Natural killer cell (primary cell): ENCODE measurements at regions of chr14 and their contacts with region 1.

Region 1: DNA sequence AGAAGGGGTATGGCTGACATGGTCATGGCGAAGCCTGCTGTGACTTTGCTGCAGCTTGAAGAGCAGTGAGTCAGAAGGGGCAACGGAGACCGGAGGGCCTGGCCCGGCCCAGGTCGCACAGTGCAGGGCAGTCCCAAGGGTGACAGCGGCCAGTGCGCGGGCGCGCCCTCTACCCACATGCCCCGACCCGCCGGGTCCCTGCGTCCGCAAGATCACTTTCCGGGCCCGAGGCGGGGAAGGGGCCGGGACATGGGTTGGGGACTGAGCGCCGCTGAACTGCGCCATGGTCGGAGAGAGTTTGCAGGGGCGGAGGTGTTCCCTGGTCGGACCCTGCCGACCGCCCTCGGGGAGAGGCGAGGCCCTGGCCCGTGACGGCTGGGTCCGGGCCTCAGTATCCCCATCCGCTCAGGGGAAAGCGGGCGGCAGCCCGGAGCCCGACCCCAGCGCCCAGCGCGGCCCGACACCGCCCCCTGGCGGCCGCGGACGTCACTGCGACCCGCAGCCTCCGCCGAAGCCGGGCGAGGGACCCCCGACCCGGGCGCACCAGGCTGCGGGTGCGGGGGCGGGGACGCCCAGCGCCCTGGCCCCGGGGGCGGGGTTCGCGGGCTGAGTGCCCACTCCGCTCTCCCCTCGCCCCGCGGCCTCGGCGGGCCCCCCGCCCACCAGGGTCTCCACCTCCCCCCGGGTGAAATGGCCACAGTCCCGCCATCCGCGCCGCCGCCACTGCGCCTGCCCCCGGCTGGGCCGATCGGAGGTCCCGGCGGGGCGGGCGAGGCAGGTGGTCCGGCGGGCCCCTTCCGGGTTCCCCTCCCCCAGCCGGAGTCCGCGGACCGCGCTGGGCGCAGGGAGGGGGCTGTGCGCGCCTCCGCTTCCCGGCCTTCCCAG is 7.2 kb upstream of the ANKRD9 start:
- DNase-seq: peak; percentile 72 to 77
- ATAC-seq: peak; percentile 84 to 93 (median 91)
- H3K4me3 ChIP-seq: peak overlapping the region; percentile 26
- H3K4me3 Mint-ChIP-seq: peak overlapping the region; percentile 91
- H3K27ac ChIP-seq: no peak overlapping the region
- H3K27ac Mint-ChIP-seq: peak overlapping the region; percentile 53 to 81
- H3K4me1 ChIP-seq: peaks cover 6% of the 10 kb centered on the region
- H3K4me1 Mint-ChIP-seq: peaks cover 4 to 9% of the 10 kb centered on the region in 2 donors
- H3K27me3 ChIP-seq: no peaks in the 10 kb centered on the region
- H3K27me3 Mint-ChIP-seq: peaks cover 0 to 8% of the 10 kb centered on the region in 2 donors
- CTCF ChIP-seq: peak; percentile 97

Region 2: GRCh38 chr14:102235275-102235897 is 281.4 kb before region 1 on chr14:
- intact Hi-C with region 1: loop called (anchors 5 kb)
- DNase-seq: peak; percentile 59 to 84
- ATAC-seq: peak; percentile 82 to 98 (median 97)
- H3K4me3 ChIP-seq: peak overlapping the region; percentile 14
- H3K4me3 Mint-ChIP-seq: no peak overlapping the region
- H3K27ac ChIP-seq: no peak overlapping the region
- H3K27ac Mint-ChIP-seq: no peak overlapping the region
- H3K4me1 ChIP-seq: no peaks in the 10 kb centered on the region
- H3K4me1 Mint-ChIP-seq: no peaks in the 10 kb centered on the region
- H3K27me3 ChIP-seq: no peaks in the 10 kb centered on the region
- H3K27me3 Mint-ChIP-seq: peaks cover 0 to 1% of the 10 kb centered on the region in 2 donors
- CTCF ChIP-seq: peak; percentile 70

Region 3: DNA sequence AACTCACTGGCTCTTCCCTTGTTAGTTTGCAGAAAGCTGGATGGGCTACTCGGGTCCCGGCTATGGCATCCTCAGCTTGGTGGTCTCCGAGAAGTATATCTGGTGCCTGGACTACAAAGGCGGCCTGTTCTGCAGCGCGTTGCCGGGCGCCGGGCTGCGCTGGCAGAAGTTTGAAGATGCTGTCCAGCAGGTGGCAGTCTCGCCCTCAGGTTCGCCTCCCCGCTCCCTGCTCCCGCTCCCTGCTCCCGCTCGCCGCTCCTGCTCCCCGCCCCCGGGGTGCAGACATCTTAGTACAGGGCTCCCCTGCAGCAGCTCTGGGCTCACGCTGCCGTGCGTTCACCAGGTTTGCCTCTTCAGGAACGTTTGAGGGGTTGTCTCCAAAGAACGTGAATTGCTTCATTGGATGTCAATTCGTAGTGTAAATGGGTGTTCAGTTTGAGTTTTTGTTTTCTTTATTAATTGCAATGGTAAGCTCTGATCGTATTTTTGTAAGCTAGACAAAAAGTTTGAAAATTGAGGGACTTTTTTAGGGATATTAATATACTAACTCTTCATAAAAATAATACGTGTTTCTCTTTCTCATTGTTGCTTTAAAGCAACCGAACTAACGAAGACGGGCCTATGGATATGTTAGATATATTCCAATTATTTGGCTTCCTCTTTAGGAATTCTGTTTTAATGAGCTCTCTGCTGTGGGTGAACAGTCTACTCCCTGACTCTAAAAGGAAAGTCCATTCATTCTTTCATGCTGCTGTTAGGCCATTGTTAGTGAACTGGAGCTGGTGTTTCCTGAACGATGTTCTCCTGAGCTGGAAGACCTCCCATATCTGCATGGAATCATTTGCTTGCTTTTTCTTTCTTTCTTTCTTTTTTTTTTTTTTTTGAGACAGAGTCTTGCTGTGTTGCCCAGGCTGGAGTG is 78.5 kb before region 1 on chr14:
- intact Hi-C with region 1: loop called (anchors 1 kb)
- DNase-seq: peak; percentile 41 to 87
- ATAC-seq: peak in 2 of 3 donors; percentile 70 to 96
- H3K4me3 ChIP-seq: no peak overlapping the region
- H3K4me3 Mint-ChIP-seq: no peak overlapping the region
- H3K27ac ChIP-seq: no peak overlapping the region
- H3K27ac Mint-ChIP-seq: no peak overlapping the region
- H3K4me1 ChIP-seq: peaks cover 5% of the 10 kb centered on the region
- H3K4me1 Mint-ChIP-seq: no peaks in the 10 kb centered on the region
- H3K27me3 ChIP-seq: no peaks in the 10 kb centered on the region
- H3K27me3 Mint-ChIP-seq: no peaks in the 10 kb centered on the region
- CTCF ChIP-seq: peak; percentile 74

Region 4: DNA sequence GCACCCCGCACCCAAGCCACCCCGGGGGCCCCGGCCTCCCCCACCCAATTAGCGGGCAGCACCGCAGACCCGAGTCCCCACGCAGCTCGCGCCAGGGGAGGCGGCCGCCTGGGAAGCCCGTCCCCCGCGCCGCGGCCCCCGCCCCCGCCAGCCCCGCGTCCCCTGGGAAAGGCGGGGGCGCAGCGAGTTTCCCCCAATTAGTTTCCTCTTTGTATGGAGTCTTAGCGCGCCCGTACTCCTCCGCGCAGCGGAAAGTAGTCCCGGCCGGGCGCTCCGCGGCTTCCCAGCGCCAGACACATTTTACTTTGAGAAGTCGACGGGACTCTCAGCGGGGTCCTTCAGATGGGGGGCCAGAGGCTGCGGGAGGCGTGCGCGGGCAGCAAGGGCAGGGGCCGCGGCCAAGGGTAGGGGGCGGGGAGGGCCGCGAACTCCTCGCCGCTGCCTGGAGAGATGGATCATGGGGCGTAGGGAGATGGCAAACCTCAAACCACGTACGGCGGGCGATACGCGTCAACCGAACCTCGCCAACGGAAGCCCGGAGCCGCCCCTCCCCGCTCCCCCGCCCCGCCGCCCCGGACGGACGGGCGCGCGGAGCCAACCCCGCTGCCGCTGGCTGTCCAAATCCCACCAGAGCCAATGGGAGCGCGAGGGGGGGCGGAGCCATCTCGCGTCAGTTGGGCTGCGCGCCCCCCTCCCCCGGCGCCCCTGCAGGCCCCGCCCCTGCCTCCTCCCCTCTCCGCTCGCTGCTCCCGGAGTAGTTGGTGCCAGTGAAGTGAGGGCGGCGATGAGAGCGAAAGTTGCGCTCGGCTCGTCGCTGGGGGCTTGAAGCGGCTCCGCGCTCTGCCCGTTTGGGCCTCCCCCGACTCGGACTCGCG is 75.4 kb after region 1 on chr14 and contains the start of gene RCOR1:
- intact Hi-C with region 1: no loop called
- DNase-seq: peak; percentile 94 to 99
- ATAC-seq: peak; percentile 86 to 97 (median 88)
- H3K4me3 ChIP-seq: peak within 1 kb of the TSS; percentile 58
- H3K4me3 Mint-ChIP-seq: peak within 1 kb of the TSS; percentile 98
- H3K27ac ChIP-seq: peak within 1 kb of the TSS; percentile 85
- H3K27ac Mint-ChIP-seq: peak within 1 kb of the TSS; percentile 89 to 93
- H3K4me1 ChIP-seq: peaks cover 17% of the 10 kb centered on the region
- H3K4me1 Mint-ChIP-seq: peaks cover 18 to 24% of the 10 kb centered on the region in 2 donors
- H3K27me3 ChIP-seq: no peaks in the 10 kb centered on the region
- H3K27me3 Mint-ChIP-seq: no peaks in the 10 kb centered on the region
- CTCF ChIP-seq: no peak
- total RNA-seq, gene RCOR1: 20.3 to 36.5 (median 21.8) TPM

Region 5: GRCh38 chr14:102831163-102831804 is 314.5 kb after region 1 on chr14:
- intact Hi-C with region 1: no loop called
- DNase-seq: no peak
- ATAC-seq: no peak
- H3K4me3 ChIP-seq: no peak overlapping the region
- H3K4me3 Mint-ChIP-seq: no peak overlapping the region
- H3K27ac ChIP-seq: no peak overlapping the region
- H3K27ac Mint-ChIP-seq: no peak overlapping the region
- H3K4me1 ChIP-seq: no peaks in the 10 kb centered on the region
- H3K4me1 Mint-ChIP-seq: peaks cover 6 to 25% of the 10 kb centered on the region in 2 donors
- H3K27me3 ChIP-seq: no peaks in the 10 kb centered on the region
- H3K27me3 Mint-ChIP-seq: no peaks in the 10 kb centered on the region
- CTCF ChIP-seq: no peak